MCF 10A (cell line): ENCODE measurements at regions of chr1 and their contacts with region 1.

Region 1: DNA sequence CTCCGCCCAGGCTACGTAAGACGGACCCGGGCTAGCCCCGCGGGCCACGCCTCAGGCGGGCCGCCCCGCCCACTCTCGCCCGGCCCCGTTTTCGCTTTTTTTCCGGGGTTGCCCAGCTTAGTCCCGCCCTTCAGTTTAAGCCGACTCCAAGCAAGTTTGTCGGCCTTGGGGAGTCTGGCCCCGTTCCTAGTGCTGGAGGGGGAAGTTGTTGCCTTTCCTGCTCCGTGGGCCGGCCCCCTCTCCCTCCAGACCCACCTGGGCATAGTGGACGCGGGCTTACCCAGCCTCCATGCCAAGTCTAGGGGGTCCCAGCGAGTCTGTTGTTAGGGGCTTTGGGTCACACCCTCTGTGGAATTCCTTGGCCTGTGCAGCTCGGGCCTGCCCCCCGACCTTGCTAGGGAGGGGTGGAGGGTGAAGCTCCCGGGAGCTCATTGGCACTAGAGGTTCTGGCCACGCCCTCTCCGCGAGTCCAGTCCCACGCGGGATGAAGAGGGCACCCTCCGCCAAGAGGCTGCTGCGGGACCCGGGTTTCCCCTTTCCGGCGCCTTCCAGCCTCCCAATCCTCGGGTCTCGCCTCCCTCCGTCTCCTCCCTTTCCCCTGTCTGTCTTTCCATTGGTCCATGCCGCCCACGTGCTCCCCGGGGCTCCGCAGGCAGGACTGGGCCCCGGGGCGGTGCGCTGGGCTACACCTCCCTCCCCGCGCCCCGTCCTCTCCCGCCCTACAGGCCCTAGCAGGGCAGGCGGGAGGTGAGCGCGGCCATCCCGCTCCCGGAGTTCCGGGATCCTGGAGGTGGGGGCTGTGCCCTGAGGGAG is 3.3 kb downstream of the RUSC1 start:
- DNase-seq: peak; percentile 99
- H3K4me3 Mint-ChIP-seq: peak overlapping the region; percentile 90
- H3K27ac Mint-ChIP-seq: peak overlapping the region; percentile 55
- H3K4me1 Mint-ChIP-seq: peaks cover 30% of the 10 kb centered on the region
- H3K27me3 Mint-ChIP-seq: no peaks in the 10 kb centered on the region
- CTCF ChIP-seq: no peak

Region 2: DNA sequence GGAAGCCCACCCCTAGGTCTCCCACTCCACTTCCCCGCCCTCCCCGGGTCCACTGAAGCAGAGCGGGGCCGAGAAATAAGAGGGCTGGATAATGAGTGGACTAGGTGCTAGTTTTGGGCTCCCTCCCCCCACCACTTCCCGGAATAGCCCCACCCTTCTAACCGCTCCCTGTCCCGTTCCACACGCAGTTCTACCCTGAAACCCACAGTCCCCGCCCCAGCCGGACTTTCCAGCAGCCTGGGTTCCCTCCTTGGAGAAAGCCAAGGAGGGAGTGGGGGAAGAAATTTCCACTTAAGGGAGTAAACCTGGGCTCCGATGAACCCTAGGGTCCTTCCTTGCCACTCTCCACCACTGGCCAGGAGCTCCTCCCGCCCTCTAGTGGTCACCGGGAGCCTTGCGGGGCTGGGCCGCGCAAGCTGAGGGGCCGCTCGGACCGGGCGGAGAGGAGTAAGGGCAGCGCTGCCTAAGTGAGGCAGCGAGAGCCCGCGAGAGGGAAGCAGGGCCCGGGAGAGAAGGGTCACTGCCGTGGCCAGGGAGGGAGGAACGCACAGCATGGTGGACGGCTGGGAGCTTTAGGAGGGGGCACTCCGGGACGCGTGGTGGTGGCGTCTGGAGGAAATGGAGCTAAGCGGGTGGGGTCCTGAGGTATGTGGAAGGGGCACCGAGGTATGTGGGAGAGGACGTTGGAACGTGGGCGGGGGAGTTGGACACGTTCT is 130.6 kb before region 1 on chr1:
- CTCF ChIA-PET with region 1: interaction called, 4 read pairs
- POLR2A ChIA-PET with region 1: interaction called, 22 read pairs
- intact Hi-C with region 1: no loop called
- DNase-seq: peak; percentile 100
- H3K4me3 Mint-ChIP-seq: peak overlapping the region; percentile 94
- H3K27ac Mint-ChIP-seq: peak overlapping the region; percentile 100
- H3K4me1 Mint-ChIP-seq: peaks cover 32% of the 10 kb centered on the region
- H3K27me3 Mint-ChIP-seq: no peaks in the 10 kb centered on the region
- CTCF ChIP-seq: peak; percentile 99

Region 3: DNA sequence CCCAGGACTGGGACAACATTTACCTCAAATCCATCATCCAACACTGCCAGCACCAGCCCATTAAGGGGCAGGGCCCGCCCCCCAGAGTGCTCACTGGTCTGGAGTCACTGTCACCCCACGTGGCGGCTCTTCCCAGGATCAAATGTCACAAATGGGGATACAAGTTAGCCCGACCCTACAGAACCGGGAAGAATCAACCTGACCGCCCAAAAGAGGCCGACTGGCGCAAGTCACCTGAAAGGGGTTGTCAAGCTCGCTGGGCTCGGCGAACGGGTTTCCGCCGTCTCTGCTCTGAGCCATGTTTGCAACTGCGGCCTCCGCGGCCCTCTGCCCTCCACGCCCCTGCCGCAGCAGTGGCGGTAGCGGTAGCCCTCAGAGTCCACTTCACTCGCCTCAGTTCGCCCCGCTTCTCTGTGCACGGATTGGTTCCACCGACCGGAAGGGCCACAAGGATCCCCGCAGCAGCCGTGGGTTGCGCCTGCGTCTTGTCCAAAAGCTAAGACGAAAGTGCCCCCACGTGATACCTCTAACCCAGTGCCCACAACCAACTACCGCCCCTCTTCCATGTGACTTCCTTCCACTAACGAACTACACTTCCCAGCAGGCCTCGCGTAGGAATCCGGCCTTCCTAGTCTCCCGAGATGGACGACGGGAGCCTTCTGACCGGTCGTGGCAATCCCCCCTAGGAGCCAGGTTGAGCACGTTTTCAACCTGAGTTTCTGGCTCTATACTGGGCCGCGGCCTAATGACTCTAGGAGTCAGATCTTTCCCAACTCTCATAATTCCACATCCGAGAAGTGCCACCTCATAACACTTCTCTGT is 61.9 kb before region 1 on chr1 and contains the start of gene SCAMP3:
- CTCF ChIA-PET with region 1: interaction called, 10 read pairs
- POLR2A ChIA-PET with region 1: interaction called, 28 read pairs
- intact Hi-C with region 1: no loop called
- DNase-seq: peak; percentile 100
- H3K4me3 Mint-ChIP-seq: peak within 1 kb of the TSS; percentile 98
- H3K27ac Mint-ChIP-seq: peak within 1 kb of the TSS; percentile 96
- H3K4me1 Mint-ChIP-seq: peaks cover 18% of the 10 kb centered on the region
- H3K27me3 Mint-ChIP-seq: no peaks in the 10 kb centered on the region
- CTCF ChIP-seq: no peak
- total RNA-seq, gene SCAMP3: 80.6 and 88.1 TPM in 2 replicates

Region 4: DNA sequence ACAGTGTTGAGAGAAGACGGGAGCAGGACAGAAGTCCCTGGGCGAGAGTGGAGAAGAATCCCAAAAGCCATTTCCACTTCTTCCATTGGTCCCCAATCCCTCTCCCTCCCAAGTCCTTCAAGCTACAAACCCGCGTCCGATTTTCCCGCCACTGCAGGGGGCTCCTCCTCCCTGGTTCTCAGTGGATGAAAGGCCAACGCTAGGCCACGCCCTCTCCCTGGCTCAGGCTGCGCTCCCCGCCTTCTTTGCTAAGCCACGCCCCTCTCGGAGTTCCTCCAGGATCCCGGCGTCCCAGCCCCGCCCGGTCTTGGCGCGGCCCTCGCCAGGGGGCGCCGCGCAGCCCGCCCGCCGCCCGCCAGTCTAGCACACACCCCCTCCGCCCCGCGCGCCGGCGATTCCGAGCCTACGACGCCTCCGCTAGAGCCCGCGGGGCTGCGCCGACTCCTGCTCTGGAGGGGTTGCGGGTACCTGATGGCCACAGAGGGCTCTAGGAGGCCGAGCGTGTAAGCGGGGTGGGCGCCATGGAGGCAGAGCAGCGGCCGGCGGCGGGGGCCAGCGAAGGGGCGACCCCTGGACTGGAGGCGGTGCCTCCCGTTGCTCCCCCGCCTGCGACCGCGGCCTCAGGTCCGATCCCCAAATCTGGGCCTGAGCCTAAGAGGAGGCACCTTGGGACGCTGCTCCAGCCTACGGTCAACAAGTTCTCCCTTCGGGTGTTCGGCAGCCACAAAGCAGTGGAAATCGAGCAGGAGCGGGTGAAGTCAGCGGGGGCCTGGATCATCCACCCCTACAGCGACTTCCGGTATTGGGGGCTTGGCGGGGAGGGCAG is 46.7 kb before region 1 on chr1 and contains the start of gene HCN3:
- CTCF ChIA-PET with region 1: interaction called, 34 read pairs
- POLR2A ChIA-PET with region 1: interaction called, 61 read pairs
- intact Hi-C with region 1: loop called (anchors 1 kb)
- DNase-seq: peak; percentile 98
- H3K4me3 Mint-ChIP-seq: peak within 1 kb of the TSS; percentile 72
- H3K27ac Mint-ChIP-seq: no peak within 1 kb of the TSS
- H3K4me1 Mint-ChIP-seq: peaks cover 18% of the 10 kb centered on the region
- H3K27me3 Mint-ChIP-seq: no peaks in the 10 kb centered on the region
- CTCF ChIP-seq: peak; percentile 90
- total RNA-seq, gene HCN3: 2.5 and 4.3 TPM in 2 replicates

Region 5: DNA sequence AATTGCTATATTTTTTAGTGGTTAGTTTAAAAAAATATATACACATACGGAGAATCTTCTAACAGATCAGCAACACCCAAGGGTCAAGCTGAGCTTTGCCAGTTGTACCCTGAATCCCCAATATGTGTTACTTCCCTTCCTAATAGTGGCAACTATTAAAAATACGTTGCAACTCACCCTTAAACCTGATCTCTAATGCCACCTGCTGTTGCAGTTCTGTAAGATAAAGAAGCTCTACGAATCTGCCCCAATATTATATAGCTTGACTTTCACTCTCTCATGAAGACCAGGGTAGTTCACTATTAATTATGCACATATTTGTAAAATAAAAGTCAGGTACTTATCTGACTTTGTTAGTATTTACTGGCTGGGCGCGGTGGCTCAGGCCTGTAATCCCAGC is 180.2 kb after region 1 on chr1:
- CTCF ChIA-PET with region 1: interaction called, 3 read pairs
- POLR2A ChIA-PET with region 1: no interaction called
- intact Hi-C with region 1: loop called (anchors 1 kb)
- DNase-seq: peak; percentile 63
- H3K4me3 Mint-ChIP-seq: no peak overlapping the region
- H3K27ac Mint-ChIP-seq: no peak overlapping the region
- H3K4me1 Mint-ChIP-seq: peaks cover 33% of the 10 kb centered on the region
- H3K27me3 Mint-ChIP-seq: no peaks in the 10 kb centered on the region
- CTCF ChIP-seq: peak; percentile 61

Region 6: DNA sequence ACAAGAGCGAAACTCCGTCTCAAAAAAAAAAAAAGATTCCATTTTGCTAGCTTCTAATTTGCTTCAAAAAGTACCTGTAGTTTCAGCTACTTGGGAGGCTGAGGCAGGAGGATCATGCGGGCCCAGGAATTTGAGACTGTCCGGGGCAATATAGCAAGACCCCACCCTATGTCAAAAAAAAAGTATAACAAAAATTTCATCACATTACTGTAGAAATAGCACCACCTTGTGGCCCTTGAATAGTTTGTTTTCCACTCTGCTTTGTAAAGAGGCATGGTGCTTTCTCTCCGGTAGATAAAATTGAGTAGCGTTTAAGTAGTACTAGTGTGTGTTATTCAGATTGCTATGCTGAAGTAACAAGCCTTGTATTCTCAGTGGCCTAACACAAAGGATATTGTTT is 267.8 kb after region 1 on chr1:
- CTCF ChIA-PET with region 1: interaction called, 4 read pairs
- POLR2A ChIA-PET with region 1: interaction called, 4 read pairs
- intact Hi-C with region 1: loop called (anchors 5 kb)
- DNase-seq: peak; percentile 78
- H3K4me3 Mint-ChIP-seq: no peak overlapping the region
- H3K27ac Mint-ChIP-seq: no peak overlapping the region
- H3K4me1 Mint-ChIP-seq: no peaks in the 10 kb centered on the region
- H3K27me3 Mint-ChIP-seq: no peaks in the 10 kb centered on the region
- CTCF ChIP-seq: peak; percentile 80